ENCODE measurements at regions of chr12 and their contacts with region 1.

Region 1: GRCh38 chr12:104381731-104382480 is 74.8 kb upstream of the CHST11 start:
- DNase-seq: peak; percentile 52 to 77 (median 73)
- ATAC-seq: peak in 3 of 4 donors; percentile 86 to 93 (median 91)
- H3K4me3 ChIP-seq: no peak overlapping the region
- H3K27ac ChIP-seq: no peak overlapping the region
- H3K4me1 ChIP-seq: peaks cover 0 to 10% (median 4%) of the 10 kb centered on the region in 12 donors
- H3K27me3 ChIP-seq: no peaks in the 10 kb centered on the region
- CTCF ChIP-seq: peak; percentile 90 to 99 (median 94)
- POLR2A ChIP-seq: no peak

Region 2: GRCh38 chr12:103791346-103791920 is 590.5 kb before region 1 on chr12:
- intact Hi-C with region 1: no loop called
- DNase-seq: no peak
- ATAC-seq: no peak
- H3K4me3 ChIP-seq: no peak overlapping the region
- H3K27ac ChIP-seq: peak overlapping the region in 1 of 12 donors; percentile 45
- H3K4me1 ChIP-seq: peaks cover 0 to 3% (median 0%) of the 10 kb centered on the region in 12 donors
- H3K27me3 ChIP-seq: no peaks in the 10 kb centered on the region
- CTCF ChIP-seq: no peak
- POLR2A ChIP-seq: no peak

Region 3: GRCh38 chr12:104243551-104243950 is 138.4 kb before region 1 on chr12:
- intact Hi-C with region 1: no loop called
- DNase-seq: no peak
- ATAC-seq: peak in 1 of 4 donors; percentile 49
- H3K4me3 ChIP-seq: no peak overlapping the region
- H3K27ac ChIP-seq: no peak overlapping the region
- H3K4me1 ChIP-seq: peaks cover 0 to 5% (median 0%) of the 10 kb centered on the region in 12 donors
- H3K27me3 ChIP-seq: no peaks in the 10 kb centered on the region
- CTCF ChIP-seq: no peak
- POLR2A ChIP-seq: no peak

Region 4: GRCh38 chr12:104399740-104400612 is 18.1 kb after region 1 on chr12:
- intact Hi-C with region 1: no loop called
- DNase-seq: no peak
- ATAC-seq: no peak
- H3K4me3 ChIP-seq: no peak overlapping the region
- H3K27ac ChIP-seq: no peak overlapping the region
- H3K4me1 ChIP-seq: no peaks in the 10 kb centered on the region
- H3K27me3 ChIP-seq: no peaks in the 10 kb centered on the region
- CTCF ChIP-seq: no peak
- POLR2A ChIP-seq: no peak

Region 5: GRCh38 chr12:104671407-104672098 is 289.6 kb after region 1 on chr12:
- intact Hi-C with region 1: loop called in 4 of 10 experiments (anchors 5 to 10 kb)
- DNase-seq: peak; percentile 82 to 91 (median 83)
- ATAC-seq: peak; percentile 22 to 72 (median 58)
- H3K4me3 ChIP-seq: peak overlapping the region in 1 of 12 donors; percentile 4
- H3K27ac ChIP-seq: peak overlapping the region in 11 of 12 donors; percentile 42 to 89 (median 71)
- H3K4me1 ChIP-seq: peaks cover 3 to 81% (median 57%) of the 10 kb centered on the region in 12 donors
- H3K27me3 ChIP-seq: no peaks in the 10 kb centered on the region
- CTCF ChIP-seq: no peak
- POLR2A ChIP-seq: no peak

Region 6: GRCh38 chr12:104790296-104791125 is 408.6 kb after region 1 on chr12:
- intact Hi-C with region 1: loop called in 1 of 10 experiments (anchors 10 kb)
- DNase-seq: peak in 4 of 5 donors; percentile 28 to 78 (median 54)
- ATAC-seq: peak in 3 of 4 donors; percentile 52 to 70 (median 53)
- H3K4me3 ChIP-seq: no peak overlapping the region
- H3K27ac ChIP-seq: no peak overlapping the region
- H3K4me1 ChIP-seq: peaks cover 0 to 23% (median 5%) of the 10 kb centered on the region in 12 donors
- H3K27me3 ChIP-seq: no peaks in the 10 kb centered on the region
- CTCF ChIP-seq: peak; percentile 43 to 76 (median 64)
- POLR2A ChIP-seq: no peak

Region 7: DNA sequence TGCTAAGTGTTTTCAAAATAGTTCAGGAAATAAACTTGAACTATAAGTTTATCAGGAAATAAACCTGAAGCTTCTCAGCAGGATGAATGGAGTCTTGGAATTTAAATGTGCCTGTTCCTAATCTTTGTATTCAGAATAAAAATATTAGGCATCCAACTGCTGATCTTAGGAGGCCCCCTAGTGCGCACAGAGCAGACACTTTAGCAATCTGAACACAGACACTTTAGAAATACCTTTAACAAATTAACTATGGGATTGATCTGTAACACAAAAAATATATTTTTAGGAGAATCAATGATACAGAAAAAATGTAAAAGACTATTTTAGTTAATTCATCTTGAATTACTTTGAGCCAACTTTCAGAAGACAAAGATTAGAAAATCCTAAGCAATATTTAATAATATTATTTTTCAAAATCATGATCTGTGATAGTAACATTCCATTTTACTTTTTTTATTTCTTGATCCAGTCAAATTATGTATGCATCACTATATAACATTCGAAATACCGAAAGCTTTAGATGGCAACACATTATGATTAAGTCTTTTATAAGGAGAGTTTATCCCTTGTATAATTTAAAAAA is 495.3 kb after region 1 on chr12:
- intact Hi-C with region 1: loop called (anchors 1 to 5 kb)
- DNase-seq: peak in 3 of 5 donors; percentile 27 to 55 (median 33)
- ATAC-seq: peak in 3 of 4 donors; percentile 67 to 77 (median 76)
- H3K4me3 ChIP-seq: no peak overlapping the region
- H3K27ac ChIP-seq: no peak overlapping the region
- H3K4me1 ChIP-seq: peaks cover 0 to 3% (median 0%) of the 10 kb centered on the region in 12 donors
- H3K27me3 ChIP-seq: no peaks in the 10 kb centered on the region
- CTCF ChIP-seq: peak; percentile 37 to 85 (median 76)
- POLR2A ChIP-seq: no peak

Measured in heart left ventricle (tissue), 16 donors.